PC-3 (cell line): ENCODE measurements at regions of chr12 and their contacts with region 1.

Region 1: DNA sequence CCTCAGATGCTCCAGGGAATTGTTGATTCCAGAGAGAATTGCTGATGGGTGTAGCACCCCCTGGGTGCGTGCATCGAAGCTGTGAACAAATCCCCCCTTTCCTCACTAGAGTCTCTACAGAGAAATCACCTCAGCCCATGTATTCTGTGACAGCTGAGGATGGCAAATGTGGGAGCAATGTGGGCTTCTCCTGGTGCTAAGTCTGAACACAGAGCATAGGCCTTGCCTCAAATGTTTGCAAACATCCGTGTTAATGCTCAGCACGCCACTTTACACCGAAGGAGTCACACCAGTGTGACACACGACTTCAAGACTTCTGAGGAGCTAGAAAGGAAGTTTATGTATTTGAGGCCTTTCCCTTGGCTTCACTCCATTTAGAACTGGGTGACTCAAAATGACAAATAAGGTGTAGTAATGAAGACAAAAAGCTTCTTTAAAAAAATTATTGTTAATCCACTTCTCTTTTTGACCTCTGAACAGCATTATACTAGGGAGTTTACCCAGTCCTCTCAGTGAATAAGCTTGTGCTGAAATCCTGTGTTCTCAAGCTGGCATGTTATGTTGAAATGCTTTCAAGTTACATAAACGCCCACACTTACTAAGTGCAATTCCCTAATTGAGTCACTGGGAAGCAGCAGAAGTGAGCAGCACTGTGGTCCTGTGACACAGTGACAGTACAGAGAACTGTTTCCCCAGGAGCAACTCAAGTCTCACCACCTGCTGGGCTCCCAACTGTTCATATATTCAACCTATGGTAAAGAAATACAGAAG is 92.9 kb downstream of the FAR2 start:
- DNase-seq: peak; percentile 100
- ATAC-seq: peak; percentile 84
- H3K4me3 ChIP-seq: peak overlapping the region; percentile 3; the same call in 1 of the 2 replicates
- H3K27ac ChIP-seq: peak overlapping the region; percentile 83
- H3K4me1 ChIP-seq: peaks cover 64% of the 10 kb centered on the region
- H3K27me3 ChIP-seq: no peaks in the 10 kb centered on the region
- CTCF ChIP-seq: peak; percentile 54

Region 2: GRCh38 chr12:29041621-29042020 is 200.4 kb before region 1 on chr12:
- CTCF ChIA-PET with region 1: no interaction called
- POLR2A ChIA-PET with region 1: interaction called, 5 read pairs
- intact Hi-C with region 1: loop called (anchors 1 kb)
- DNase-seq: peak; percentile 99
- ATAC-seq: peak; percentile 85
- H3K4me3 ChIP-seq: peak overlapping the region; percentile 34; the same call in 1 of the 2 replicates
- H3K27ac ChIP-seq: peak overlapping the region; percentile 88
- H3K4me1 ChIP-seq: peaks cover 49% of the 10 kb centered on the region
- H3K27me3 ChIP-seq: no peaks in the 10 kb centered on the region
- CTCF ChIP-seq: no peak

Region 3: DNA sequence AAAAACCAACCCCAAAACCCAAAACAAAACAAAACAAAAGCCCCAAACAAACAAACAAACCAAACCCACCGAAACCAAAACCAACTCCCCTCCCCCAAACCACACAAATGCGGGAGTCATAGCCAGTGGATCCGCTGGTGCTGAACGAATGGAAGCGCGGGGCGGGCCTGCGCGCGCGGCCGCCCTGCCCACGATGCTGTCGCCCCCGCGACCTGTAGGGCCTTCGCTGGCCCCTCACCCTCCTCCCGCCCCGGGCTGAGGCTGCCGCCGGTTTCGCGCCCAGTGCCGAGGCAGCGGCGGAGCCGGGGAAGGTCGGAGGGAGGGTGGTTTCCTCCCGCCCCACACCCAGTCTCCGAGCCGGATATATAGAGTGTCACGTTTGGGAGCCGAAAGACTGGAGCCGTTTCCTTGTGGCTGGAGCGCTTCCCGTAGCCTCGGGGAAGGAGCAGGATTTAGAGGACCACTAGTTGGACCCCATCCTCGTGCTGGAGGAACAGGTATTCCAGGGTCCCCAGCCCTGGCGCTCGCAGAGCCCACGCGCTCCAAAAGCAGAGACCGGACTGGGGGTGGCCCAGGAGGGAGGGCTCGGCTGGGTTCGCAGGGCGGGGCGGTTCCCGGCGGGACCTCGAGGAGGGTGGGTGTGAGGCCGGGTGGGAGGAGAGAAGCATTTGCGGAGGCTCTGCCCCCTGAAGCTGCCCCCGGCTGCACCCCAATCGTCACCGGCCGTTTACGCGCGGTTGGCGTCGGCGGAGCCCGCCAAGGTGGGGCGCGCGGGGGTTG is 92.9 kb before region 1 on chr12 and contains the start of gene FAR2:
- CTCF ChIA-PET with region 1: no interaction called
- POLR2A ChIA-PET with region 1: interaction called, 4 read pairs
- intact Hi-C with region 1: loop called (anchors 1 kb)
- DNase-seq: peak; percentile 69
- ATAC-seq: peak; percentile 77
- H3K4me3 ChIP-seq: peak within 1 kb of the TSS; percentile 81
- H3K27ac ChIP-seq: peak within 1 kb of the TSS; percentile 17
- H3K4me1 ChIP-seq: peaks cover 16% of the 10 kb centered on the region
- H3K27me3 ChIP-seq: no peaks in the 10 kb centered on the region
- CTCF ChIP-seq: no peak; the same call in 1 of the 2 replicates
- total RNA-seq, gene FAR2: 10.2 and 13.5 TPM in 2 replicates

Region 4: GRCh38 chr12:29309320-29309902 is 67.4 kb after region 1 on chr12:
- CTCF ChIA-PET with region 1: interaction called, 4 read pairs
- POLR2A ChIA-PET with region 1: interaction called, 4 read pairs
- intact Hi-C with region 1: loop called (anchors 2 kb)
- DNase-seq: peak; percentile 73
- ATAC-seq: peak; percentile 83
- H3K4me3 ChIP-seq: no peak overlapping the region
- H3K27ac ChIP-seq: no peak overlapping the region
- H3K4me1 ChIP-seq: no peaks in the 10 kb centered on the region
- H3K27me3 ChIP-seq: no peaks in the 10 kb centered on the region
- CTCF ChIP-seq: peak; percentile 93

Region 5: DNA sequence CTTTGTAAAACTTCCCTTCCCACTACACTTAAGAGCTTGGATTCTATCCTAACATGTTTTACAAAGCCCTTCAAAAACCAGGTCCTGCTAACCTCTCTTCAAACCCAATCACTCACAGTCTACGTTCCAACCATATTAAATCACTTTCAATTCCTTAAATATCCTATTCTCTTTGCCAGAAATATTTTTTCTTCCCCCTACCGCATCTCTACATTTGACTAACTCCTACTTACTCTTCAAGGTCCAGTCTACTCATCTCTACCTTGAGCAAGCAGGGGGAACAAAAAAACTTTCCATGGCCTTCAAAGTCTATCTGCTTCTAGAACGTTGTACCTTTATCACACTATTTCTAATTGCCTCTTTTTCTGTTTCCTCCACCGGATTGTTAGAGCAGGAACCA is 132.9 kb after region 1 on chr12:
- CTCF ChIA-PET with region 1: no interaction called
- POLR2A ChIA-PET with region 1: no interaction called
- intact Hi-C with region 1: no loop called
- DNase-seq: no peak
- ATAC-seq: no peak
- H3K4me3 ChIP-seq: no peak overlapping the region
- H3K27ac ChIP-seq: no peak overlapping the region
- H3K4me1 ChIP-seq: peaks cover 15% of the 10 kb centered on the region
- H3K27me3 ChIP-seq: no peaks in the 10 kb centered on the region
- CTCF ChIP-seq: no peak

Region 6: GRCh38 chr12:29427964-29428363 is 186.0 kb after region 1 on chr12:
- CTCF ChIA-PET with region 1: no interaction called
- POLR2A ChIA-PET with region 1: no interaction called
- intact Hi-C with region 1: loop called (anchors 2 kb)
- DNase-seq: peak; percentile 53
- ATAC-seq: peak; percentile 6; the same call in 1 of the 2 replicates
- H3K4me3 ChIP-seq: no peak overlapping the region
- H3K27ac ChIP-seq: peak overlapping the region; percentile 28
- H3K4me1 ChIP-seq: peaks cover 56% of the 10 kb centered on the region
- H3K27me3 ChIP-seq: no peaks in the 10 kb centered on the region
- CTCF ChIP-seq: peak; percentile 56